ENCODE measurements at regions of chr7 and their contacts with region 1.

Region 1: DNA sequence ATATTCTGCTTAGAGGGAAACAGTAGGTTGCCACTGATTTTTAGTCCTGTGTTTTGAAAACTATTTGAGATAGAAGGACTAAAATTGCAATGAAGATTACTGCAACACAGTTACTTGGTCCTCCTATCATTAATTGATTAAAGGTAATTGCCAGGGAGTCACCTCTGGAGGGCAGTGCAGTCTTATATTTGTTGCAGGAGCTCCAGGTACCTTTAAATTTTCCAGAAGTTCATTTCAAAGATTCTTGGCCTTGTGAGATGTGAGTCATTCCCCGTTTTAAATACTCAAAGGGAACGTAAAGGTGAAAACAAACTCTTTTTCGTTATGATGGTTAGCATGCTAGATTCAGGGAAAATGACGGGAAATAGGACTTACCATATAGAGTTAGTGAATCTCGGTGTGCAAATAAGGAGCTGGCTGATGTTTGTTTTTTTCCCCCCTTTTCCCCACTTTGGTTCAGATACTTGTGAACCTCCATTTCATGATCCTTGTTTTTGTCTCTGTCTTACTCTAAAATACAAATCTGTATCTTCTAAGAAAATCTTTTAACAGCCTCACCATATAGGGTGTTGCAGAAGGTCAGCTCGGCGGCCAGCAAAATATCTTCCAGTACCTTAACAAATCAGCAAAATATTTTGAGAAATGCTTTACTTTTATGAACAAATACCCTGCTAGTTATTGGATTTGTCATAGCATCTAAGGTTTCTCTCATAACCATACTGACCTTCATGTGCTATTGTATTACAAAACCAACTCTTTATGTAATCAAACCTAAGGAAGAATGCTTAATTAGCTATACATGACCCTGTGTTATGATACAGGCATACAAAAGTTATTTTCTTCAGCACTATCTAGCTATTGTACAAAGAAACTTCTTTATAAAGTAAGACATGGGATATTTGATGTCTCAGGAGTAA is 143.0 kb upstream of the HDAC9 start:
- DNase-seq: peak; percentile 41
- H3K4me3 Mint-ChIP-seq: no peak overlapping the region
- H3K27ac Mint-ChIP-seq: no peak overlapping the region
- H3K4me1 Mint-ChIP-seq: peaks cover 3% of the 10 kb centered on the region
- H3K27me3 Mint-ChIP-seq: no peaks in the 10 kb centered on the region

Region 2: DNA sequence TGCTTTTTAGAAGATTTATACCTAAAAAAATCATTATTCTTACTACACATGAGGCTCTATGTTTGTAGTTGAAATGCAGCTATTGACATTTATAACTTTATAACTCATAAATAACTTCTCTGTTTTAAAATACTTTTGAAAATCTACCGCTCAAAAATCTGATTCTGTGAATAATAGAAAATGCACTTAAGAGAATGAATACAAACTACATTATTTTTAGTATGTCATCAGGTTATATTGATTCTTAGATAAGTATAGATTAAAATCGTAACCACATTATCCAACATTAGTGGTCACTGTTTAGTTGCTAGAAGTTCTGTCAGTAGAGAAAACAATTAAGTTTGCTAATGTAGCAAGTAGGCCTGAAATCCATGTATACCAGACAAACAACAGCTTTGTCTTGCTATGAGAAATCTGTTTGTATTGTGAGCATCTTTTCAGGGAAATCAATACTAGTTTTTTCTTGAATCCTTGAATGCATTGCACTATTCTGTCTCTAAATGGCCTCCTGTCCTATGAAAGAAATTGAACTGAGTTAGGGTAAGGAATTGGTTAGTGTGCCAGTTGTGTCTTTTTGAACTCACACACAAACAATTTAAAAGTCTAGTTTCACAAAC is 26.5 kb after region 1 on chr7:
- CTCF ChIA-PET with region 1: no interaction called
- intact Hi-C with region 1: no loop called
- DNase-seq: no peak
- H3K4me3 Mint-ChIP-seq: no peak overlapping the region
- H3K27ac Mint-ChIP-seq: no peak overlapping the region
- H3K4me1 Mint-ChIP-seq: no peaks in the 10 kb centered on the region
- H3K27me3 Mint-ChIP-seq: no peaks in the 10 kb centered on the region

Region 3: DNA sequence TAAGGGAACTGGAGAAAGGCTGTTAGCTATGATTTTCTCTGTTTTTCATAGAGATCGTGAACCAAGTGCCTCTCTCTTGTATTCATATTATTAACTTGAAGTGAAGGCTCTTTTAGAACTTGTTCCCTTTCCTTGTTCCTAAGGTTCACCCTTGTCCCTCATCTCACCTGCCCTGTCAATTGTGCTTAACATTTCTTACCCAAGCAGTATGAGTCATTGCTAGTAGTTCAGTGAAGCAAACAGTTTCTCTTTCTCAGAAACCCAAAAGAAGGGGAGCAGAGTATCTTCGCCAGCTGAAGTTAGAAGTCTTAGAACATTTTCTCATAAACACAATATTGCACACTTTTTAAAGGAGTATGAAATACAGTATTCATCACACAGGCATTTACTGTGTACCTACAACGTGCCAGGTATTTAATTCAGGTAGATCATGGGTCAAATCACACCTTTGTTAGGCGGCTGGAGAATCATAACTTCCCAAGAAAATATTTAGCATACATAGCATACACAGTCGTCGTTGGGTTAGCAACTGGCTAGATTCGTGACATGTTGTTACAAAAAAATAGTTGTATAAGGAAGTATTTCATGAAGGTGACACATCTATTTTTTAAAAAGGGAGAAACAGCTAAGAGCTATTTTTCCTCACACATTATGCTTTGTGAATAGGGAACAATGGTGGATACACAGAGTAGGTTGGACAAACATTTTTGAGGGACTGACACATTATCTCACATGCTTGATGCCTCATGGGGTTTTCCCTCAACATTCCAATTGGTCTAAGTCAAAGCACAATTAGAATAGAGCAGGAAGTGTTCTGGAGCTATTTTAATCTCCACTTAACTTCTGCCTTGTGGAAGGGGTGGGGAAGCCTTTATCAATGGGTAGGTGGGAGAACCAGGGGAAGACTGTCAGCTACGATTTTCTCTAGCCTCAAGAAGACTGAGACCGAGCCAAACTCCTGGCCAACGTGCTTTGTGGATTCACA is 156.1 kb after region 1 on chr7:
- CTCF ChIA-PET with region 1: no interaction called
- intact Hi-C with region 1: no loop called
- DNase-seq: no peak
- H3K4me3 Mint-ChIP-seq: no peak overlapping the region
- H3K27ac Mint-ChIP-seq: no peak overlapping the region
- H3K4me1 Mint-ChIP-seq: no peaks in the 10 kb centered on the region
- H3K27me3 Mint-ChIP-seq: no peaks in the 10 kb centered on the region

Region 4: DNA sequence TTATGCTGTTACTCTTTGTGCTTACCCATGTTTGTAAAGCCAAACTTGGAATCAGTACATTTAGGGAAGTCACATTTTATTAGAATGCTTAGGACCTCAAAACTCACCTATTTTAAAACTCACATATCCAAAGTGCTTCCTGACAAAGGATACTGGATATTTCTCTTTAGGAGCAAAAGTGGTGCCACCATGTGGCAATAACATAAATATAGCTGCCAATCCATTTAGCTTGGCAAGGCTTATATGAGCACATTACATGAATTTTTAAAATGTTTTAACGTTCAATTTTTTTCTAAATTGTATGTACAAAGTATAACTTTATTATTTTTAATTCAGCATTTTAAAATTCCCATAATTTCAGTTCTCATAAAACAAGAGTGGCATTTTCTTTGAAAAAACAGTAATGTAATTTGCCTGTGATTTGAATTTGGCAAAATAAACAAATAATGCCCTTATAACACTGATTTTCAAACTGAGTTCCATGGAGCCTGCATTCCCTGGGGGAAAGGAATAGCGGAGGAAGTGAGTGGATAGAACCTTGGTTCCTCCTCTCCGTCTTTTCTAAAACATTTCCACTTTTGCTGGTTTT is 218.4 kb after region 1 on chr7:
- CTCF ChIA-PET with region 1: no interaction called
- intact Hi-C with region 1: loop called (anchors 2 kb)
- DNase-seq: no peak
- H3K4me3 Mint-ChIP-seq: no peak overlapping the region
- H3K27ac Mint-ChIP-seq: no peak overlapping the region
- H3K4me1 Mint-ChIP-seq: no peaks in the 10 kb centered on the region
- H3K27me3 Mint-ChIP-seq: no peaks in the 10 kb centered on the region

Region 5: GRCh38 chr7:18666107-18666728 is 313.6 kb after region 1 on chr7:
- CTCF ChIA-PET with region 1: interaction called, 9 read pairs
- intact Hi-C with region 1: loop called (anchors 1 kb)
- DNase-seq: peak; percentile 75
- H3K4me3 Mint-ChIP-seq: no peak overlapping the region
- H3K27ac Mint-ChIP-seq: no peak overlapping the region
- H3K4me1 Mint-ChIP-seq: no peaks in the 10 kb centered on the region
- H3K27me3 Mint-ChIP-seq: peaks cover 2% of the 10 kb centered on the region

Region 6: GRCh38 chr7:19051767-19052375 is 699.3 kb after region 1 on chr7:
- CTCF ChIA-PET with region 1: interaction called, 3 read pairs
- intact Hi-C with region 1: loop called (anchors 1 kb)
- DNase-seq: peak; percentile 43
- H3K4me3 Mint-ChIP-seq: no peak overlapping the region
- H3K27ac Mint-ChIP-seq: no peak overlapping the region
- H3K4me1 Mint-ChIP-seq: no peaks in the 10 kb centered on the region
- H3K27me3 Mint-ChIP-seq: no peaks in the 10 kb centered on the region

Region 7: GRCh38 chr7:19491821-19492452 is 1139.3 kb after region 1 on chr7:
- CTCF ChIA-PET with region 1: no interaction called
- intact Hi-C with region 1: loop called (anchors 5 kb)
- DNase-seq: no peak
- H3K4me3 Mint-ChIP-seq: no peak overlapping the region
- H3K27ac Mint-ChIP-seq: no peak overlapping the region
- H3K4me1 Mint-ChIP-seq: no peaks in the 10 kb centered on the region
- H3K27me3 Mint-ChIP-seq: no peaks in the 10 kb centered on the region

Region 8: GRCh38 chr7:19665399-19666008 is 1312.9 kb after region 1 on chr7:
- CTCF ChIA-PET with region 1: no interaction called
- intact Hi-C with region 1: loop called (anchors 1 kb)
- DNase-seq: no peak
- H3K4me3 Mint-ChIP-seq: no peak overlapping the region
- H3K27ac Mint-ChIP-seq: no peak overlapping the region
- H3K4me1 Mint-ChIP-seq: peaks cover 7% of the 10 kb centered on the region
- H3K27me3 Mint-ChIP-seq: peaks cover 3% of the 10 kb centered on the region

Measured in activated naive CD4-positive, alpha-beta T cell treated with anti-CD3 and anti-CD28 coated beads for 36 hours (primary cell).